Activated CD4-positive, alpha-beta T cell treated with anti-CD3 and anti-CD28 coated beads, Interleukin-2, amount 10 ng/mL, durations not matched to agents 24 days and 14 days (primary cell): ENCODE measurements at regions of chr1 and their contacts with region 1.

Region 1: DNA sequence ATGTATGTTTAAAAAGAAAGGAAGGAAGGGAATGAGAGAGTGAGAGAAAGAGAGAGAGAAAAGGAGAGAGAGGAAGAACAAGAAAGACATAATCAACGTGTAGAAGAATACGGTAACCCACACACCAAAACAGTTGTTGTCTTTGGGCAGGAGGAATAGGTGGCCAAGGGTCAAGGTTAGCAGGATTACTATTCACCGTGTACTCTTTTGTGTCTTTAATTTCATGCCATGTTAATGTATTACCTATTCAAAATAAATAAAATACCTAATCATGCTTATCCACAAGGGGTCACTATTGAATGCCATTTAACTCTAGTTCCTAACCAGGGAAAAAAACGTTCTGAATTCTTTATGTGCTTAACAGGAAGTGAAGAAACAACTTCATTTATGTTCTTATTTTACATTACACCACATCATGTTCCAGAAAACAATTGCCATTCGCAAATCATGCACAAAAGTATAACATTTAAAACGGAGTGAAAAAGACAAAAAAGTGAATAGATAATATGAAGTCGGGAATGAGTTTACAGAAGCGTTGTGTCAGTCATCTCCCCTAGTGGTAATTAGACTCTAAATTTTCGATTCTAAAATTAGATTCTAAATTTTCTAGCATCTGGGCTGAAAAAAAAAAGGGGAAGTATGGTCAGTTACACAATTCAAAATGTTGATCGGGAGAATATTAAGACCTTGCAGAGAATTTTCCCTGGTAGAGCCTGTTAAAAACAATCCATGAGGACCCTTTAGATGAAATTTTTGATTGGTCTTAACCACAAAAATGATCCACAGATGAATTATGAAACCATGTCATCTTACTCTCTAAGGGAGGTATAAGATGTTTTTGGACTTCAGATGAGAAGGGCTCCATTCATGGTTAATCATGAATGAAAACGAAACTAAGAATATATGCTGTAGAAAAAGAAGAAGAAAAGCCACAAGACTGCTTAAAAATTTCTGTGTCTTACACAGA is 700 bp upstream of the KMO start:
- DNase-seq: peak; percentile 58
- H3K4me3 Mint-ChIP-seq: peak overlapping the region; percentile 89
- H3K27ac Mint-ChIP-seq: peak overlapping the region; percentile 86
- H3K4me1 Mint-ChIP-seq: peaks cover 15% of the 10 kb centered on the region
- H3K27me3 Mint-ChIP-seq: peaks cover 28% of the 10 kb centered on the region

Region 2: DNA sequence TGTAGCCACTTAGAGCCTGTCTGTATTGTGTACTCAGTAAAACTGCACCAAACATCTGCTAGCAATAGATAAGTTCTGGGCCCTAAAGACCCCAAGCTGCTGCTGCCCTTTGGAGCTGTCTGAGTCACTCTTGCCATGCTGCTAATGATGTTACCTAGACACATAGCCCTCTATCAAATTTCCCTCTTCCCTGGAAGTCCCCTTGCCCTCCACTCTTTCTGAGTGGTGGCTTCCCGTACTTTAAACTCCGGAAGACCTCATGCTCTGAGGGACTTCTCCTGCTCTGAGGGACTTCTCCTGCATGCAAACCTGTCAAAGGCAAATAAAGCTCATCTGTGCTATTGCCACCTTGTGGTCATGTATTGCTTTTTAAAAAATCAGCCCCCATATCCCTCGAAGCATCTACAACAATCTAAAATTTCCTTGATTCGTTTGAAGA is 45.9 kb before region 1 on chr1:
- intact Hi-C with region 1: no loop called
- DNase-seq: no peak
- H3K4me3 Mint-ChIP-seq: no peak overlapping the region
- H3K27ac Mint-ChIP-seq: no peak overlapping the region
- H3K4me1 Mint-ChIP-seq: no peaks in the 10 kb centered on the region
- H3K27me3 Mint-ChIP-seq: no peaks in the 10 kb centered on the region

Region 3: GRCh38 chr1:241519308-241520079 is 12.0 kb before region 1 on chr1 and contains the start of gene FH:
- intact Hi-C with region 1: loop called (anchors 1 kb)
- DNase-seq: peak; percentile 98
- H3K4me3 Mint-ChIP-seq: no peak within 1 kb of the TSS
- H3K27ac Mint-ChIP-seq: peak within 1 kb of the TSS; percentile 87
- H3K4me1 Mint-ChIP-seq: peaks cover 23% of the 10 kb centered on the region
- H3K27me3 Mint-ChIP-seq: peaks cover 27% of the 10 kb centered on the region
- total RNA-seq, gene FH: 98.6 and 103 TPM in 2 replicates

Region 4: DNA sequence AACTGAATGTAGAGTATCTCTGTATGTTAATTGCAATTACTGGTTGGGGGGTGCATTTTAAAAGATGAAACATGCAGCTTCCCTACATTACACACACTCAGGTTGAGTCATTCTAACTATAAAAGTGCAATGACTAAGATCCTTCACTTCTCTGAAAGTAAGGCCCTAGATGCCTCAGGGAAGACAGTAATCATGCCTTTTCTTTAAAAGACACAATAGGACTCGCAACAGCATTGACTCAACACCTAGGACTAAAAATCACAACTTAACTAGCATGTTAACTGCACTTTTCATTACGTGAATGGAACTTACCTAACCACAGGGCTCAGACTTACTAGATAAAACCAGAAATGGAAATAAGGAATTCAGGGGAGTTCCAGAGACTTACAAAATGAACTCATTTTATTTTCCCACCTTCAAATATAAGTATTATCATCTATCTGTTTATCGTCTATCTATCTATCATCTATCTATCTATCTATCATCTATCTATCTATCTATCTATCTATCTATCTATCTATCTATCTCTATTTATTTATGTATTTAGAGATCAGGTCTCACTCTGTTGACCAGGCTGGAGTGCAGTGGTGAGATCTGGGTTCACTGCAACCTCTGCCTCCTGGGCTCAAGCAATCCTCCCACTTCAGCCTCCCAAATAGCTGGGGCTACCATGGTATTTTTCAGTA is 60.9 kb after region 1 on chr1:
- intact Hi-C with region 1: loop called (anchors 5 kb)
- DNase-seq: no peak
- H3K4me3 Mint-ChIP-seq: no peak overlapping the region
- H3K27ac Mint-ChIP-seq: peak overlapping the region; percentile 19
- H3K4me1 Mint-ChIP-seq: peaks cover 3% of the 10 kb centered on the region
- H3K27me3 Mint-ChIP-seq: no peaks in the 10 kb centered on the region

Region 5: GRCh38 chr1:241617426-241617825 is 85.9 kb after region 1 on chr1:
- intact Hi-C with region 1: no loop called
- DNase-seq: no peak
- H3K4me3 Mint-ChIP-seq: no peak overlapping the region
- H3K27ac Mint-ChIP-seq: peak overlapping the region; percentile 27
- H3K4me1 Mint-ChIP-seq: peaks cover 16% of the 10 kb centered on the region
- H3K27me3 Mint-ChIP-seq: no peaks in the 10 kb centered on the region

Region 6: GRCh38 chr1:241627453-241628259 is 96.2 kb after region 1 on chr1:
- intact Hi-C with region 1: loop called (anchors 1 kb)
- DNase-seq: peak; percentile 85
- H3K4me3 Mint-ChIP-seq: peak overlapping the region; percentile 72
- H3K27ac Mint-ChIP-seq: peak overlapping the region; percentile 70
- H3K4me1 Mint-ChIP-seq: peaks cover 12% of the 10 kb centered on the region
- H3K27me3 Mint-ChIP-seq: no peaks in the 10 kb centered on the region

Region 7: DNA sequence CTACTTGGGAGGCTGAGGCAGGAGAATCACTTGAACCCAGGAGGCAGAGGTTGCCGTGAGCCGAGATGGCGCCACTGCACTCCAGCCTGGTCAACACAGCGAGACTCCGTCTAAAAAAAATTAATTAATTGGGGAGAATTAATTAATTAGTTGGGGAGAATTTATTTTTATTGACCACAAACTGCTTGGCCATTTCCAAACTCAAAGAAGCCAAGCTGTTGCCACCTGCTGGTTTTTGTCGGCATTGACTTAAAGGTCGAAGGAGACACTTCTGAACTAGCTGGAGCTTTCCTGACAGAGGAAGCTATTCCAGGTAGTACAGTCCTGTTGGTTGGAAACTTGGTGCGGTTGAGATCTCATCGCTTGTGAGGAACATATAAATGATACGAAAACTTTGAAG is 454.3 kb after region 1 on chr1:
- intact Hi-C with region 1: loop called (anchors 1 kb)
- DNase-seq: peak; percentile 61
- H3K4me3 Mint-ChIP-seq: no peak overlapping the region
- H3K27ac Mint-ChIP-seq: no peak overlapping the region
- H3K4me1 Mint-ChIP-seq: no peaks in the 10 kb centered on the region
- H3K27me3 Mint-ChIP-seq: no peaks in the 10 kb centered on the region